ENCODE measurements at regions of chr4 and their contacts with region 1.

Region 1: GRCh38 chr4:89024051-89024675 is 32.8 kb downstream of the FAM13A start:
- DNase-seq: peak; percentile 5 to 82 (median 46)
- ATAC-seq: peak; percentile 100
- H3K4me3 ChIP-seq: no peak overlapping the region
- H3K4me3 Mint-ChIP-seq: no peak overlapping the region
- H3K27ac ChIP-seq: no peak overlapping the region
- H3K27ac Mint-ChIP-seq: no peak overlapping the region
- H3K4me1 ChIP-seq: no peaks in the 10 kb centered on the region
- H3K4me1 Mint-ChIP-seq: no peaks in the 10 kb centered on the region
- H3K27me3 ChIP-seq: no peaks in the 10 kb centered on the region
- H3K27me3 Mint-ChIP-seq: peaks cover 10% of the 10 kb centered on the region
- CTCF ChIP-seq: peak; percentile 87

Region 2: GRCh38 chr4:88378691-88379559 is 645.2 kb before region 1 on chr4 and contains the start of gene HERC6:
- CTCF ChIA-PET with region 1: no interaction called
- POLR2A ChIA-PET with region 1: no interaction called
- intact Hi-C with region 1: loop called in 1 of 2 experiments (anchors 10 kb)
- DNase-seq: peak; percentile 39 to 93 (median 73)
- ATAC-seq: peak; percentile 63
- H3K4me3 ChIP-seq: peak within 1 kb of the TSS; percentile 82 to 98
- H3K4me3 Mint-ChIP-seq: peak within 1 kb of the TSS; percentile 96
- H3K27ac ChIP-seq: peak within 1 kb of the TSS; percentile 88 to 91
- H3K27ac Mint-ChIP-seq: peak within 1 kb of the TSS; percentile 95
- H3K4me1 ChIP-seq: peaks cover 31% of the 10 kb centered on the region
- H3K4me1 Mint-ChIP-seq: peaks cover 43% of the 10 kb centered on the region
- H3K27me3 ChIP-seq: no peaks in the 10 kb centered on the region
- H3K27me3 Mint-ChIP-seq: no peaks in the 10 kb centered on the region
- CTCF ChIP-seq: peak; percentile 57
- total RNA-seq, gene HERC6: 8.2 TPM

Region 3: DNA sequence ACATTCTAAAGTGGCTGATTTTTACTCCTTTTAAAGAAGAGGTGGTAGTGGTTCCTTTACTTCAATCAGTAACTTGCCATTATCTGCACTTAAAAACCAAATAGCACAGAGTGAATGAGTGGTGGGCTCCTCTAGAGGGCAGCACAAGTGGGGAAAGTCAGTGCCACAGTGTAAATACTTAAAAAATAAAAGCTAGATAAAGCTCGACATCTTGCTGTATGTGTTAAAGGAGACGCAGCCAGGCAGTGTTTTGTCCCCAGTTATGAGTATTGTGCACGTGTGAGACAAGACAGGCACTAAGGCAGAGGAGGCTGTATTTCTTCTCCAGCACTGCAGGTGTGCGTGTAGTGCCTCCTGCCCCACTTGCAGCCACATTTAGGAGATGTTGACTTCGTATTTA is 351.2 kb before region 1 on chr4:
- CTCF ChIA-PET with region 1: interaction called, 7 read pairs
- POLR2A ChIA-PET with region 1: no interaction called
- intact Hi-C with region 1: loop called in 1 of 2 experiments (anchors 1 kb)
- DNase-seq: peak in 5 of 9 experiments; percentile 23 to 54 (median 36)
- ATAC-seq: peak; percentile 69
- H3K4me3 ChIP-seq: no peak overlapping the region
- H3K4me3 Mint-ChIP-seq: no peak overlapping the region
- H3K27ac ChIP-seq: no peak overlapping the region
- H3K27ac Mint-ChIP-seq: no peak overlapping the region
- H3K4me1 ChIP-seq: no peaks in the 10 kb centered on the region
- H3K4me1 Mint-ChIP-seq: no peaks in the 10 kb centered on the region
- H3K27me3 ChIP-seq: no peaks in the 10 kb centered on the region
- H3K27me3 Mint-ChIP-seq: no peaks in the 10 kb centered on the region
- CTCF ChIP-seq: peak; percentile 52

Region 4: GRCh38 chr4:89009115-89009514 is 15.0 kb before region 1 on chr4:
- CTCF ChIA-PET with region 1: interaction called, 11 read pairs
- POLR2A ChIA-PET with region 1: no interaction called
- intact Hi-C with region 1: no loop called
- DNase-seq: no peak
- ATAC-seq: no peak
- H3K4me3 ChIP-seq: no peak overlapping the region
- H3K4me3 Mint-ChIP-seq: no peak overlapping the region
- H3K27ac ChIP-seq: no peak overlapping the region
- H3K27ac Mint-ChIP-seq: no peak overlapping the region
- H3K4me1 ChIP-seq: no peaks in the 10 kb centered on the region
- H3K4me1 Mint-ChIP-seq: no peaks in the 10 kb centered on the region
- H3K27me3 ChIP-seq: no peaks in the 10 kb centered on the region
- H3K27me3 Mint-ChIP-seq: no peaks in the 10 kb centered on the region
- CTCF ChIP-seq: no peak

Region 5: GRCh38 chr4:89307446-89308160 is 283.4 kb after region 1 on chr4 and contains the start of gene GPRIN3:
- CTCF ChIA-PET with region 1: no interaction called
- POLR2A ChIA-PET with region 1: no interaction called
- intact Hi-C with region 1: no loop called
- DNase-seq: peak; percentile 39 to 83 (median 68)
- ATAC-seq: peak; percentile 63
- H3K4me3 ChIP-seq: peak within 1 kb of the TSS; percentile 67 to 88
- H3K4me3 Mint-ChIP-seq: peak within 1 kb of the TSS; percentile 93
- H3K27ac ChIP-seq: peak within 1 kb of the TSS; percentile 59 to 70
- H3K27ac Mint-ChIP-seq: peak within 1 kb of the TSS; percentile 90
- H3K4me1 ChIP-seq: peaks cover 38% of the 10 kb centered on the region
- H3K4me1 Mint-ChIP-seq: peaks cover 54% of the 10 kb centered on the region
- H3K27me3 ChIP-seq: no peaks in the 10 kb centered on the region
- H3K27me3 Mint-ChIP-seq: no peaks in the 10 kb centered on the region
- CTCF ChIP-seq: no peak
- total RNA-seq, gene GPRIN3: 32.1 to 34.4 TPM